Dendritic cell treated with granulocyte-macrophage colony-stimulating factor and Interleukin-4, amounts not matched to agents 40 ng/mL and 50 ng/mL, for 4 days (primary cell): ENCODE measurements at regions of chr7 and their contacts with region 1.

Region 1: GRCh38 chr7:95723592-95724180 is 48.7 kb upstream of the DYNC1I1 start:
- H3K4me3 Mint-ChIP-seq: no peak overlapping the region
- H3K27ac Mint-ChIP-seq: no peak overlapping the region
- H3K4me1 Mint-ChIP-seq: no peaks in the 10 kb centered on the region
- H3K27me3 Mint-ChIP-seq: peaks cover 6% of the 10 kb centered on the region

Region 2: GRCh38 chr7:95690367-95690947 is 33.2 kb before region 1 on chr7:
- intact Hi-C with region 1: no loop called
- H3K4me3 Mint-ChIP-seq: no peak overlapping the region
- H3K27ac Mint-ChIP-seq: no peak overlapping the region
- H3K4me1 Mint-ChIP-seq: no peaks in the 10 kb centered on the region
- H3K27me3 Mint-ChIP-seq: no peaks in the 10 kb centered on the region

Region 3: GRCh38 chr7:95737828-95738505 is 14.3 kb after region 1 on chr7:
- intact Hi-C with region 1: no loop called
- H3K4me3 Mint-ChIP-seq: no peak overlapping the region
- H3K27ac Mint-ChIP-seq: no peak overlapping the region
- H3K4me1 Mint-ChIP-seq: no peaks in the 10 kb centered on the region
- H3K27me3 Mint-ChIP-seq: peaks cover 2% of the 10 kb centered on the region

Region 4: DNA sequence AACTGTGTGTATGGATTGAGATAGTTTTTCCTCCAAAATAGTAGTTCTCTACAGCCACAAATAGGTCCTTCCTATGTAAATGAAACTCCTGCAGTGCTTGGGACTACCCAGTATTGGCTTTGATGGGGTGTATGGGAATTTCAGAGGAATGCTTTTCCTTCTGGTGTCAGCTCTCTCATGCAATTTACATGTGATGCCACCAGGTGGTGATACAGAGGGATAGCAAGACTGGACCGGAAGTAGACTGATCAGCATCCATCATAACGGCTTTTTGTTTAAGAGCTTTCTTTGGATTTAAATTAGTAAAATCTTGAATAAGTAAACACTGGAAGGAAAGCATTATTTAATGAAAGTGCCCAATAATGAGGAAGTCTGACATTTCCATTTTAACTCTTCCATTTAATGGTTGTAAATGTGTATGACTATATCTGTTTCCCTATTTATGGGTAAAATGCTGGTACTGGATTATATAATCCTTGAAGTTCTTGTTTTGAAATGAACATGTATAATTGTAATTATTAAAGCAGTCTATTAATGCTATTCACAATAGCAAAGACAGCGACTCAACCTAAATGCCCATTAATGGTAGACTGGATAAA is 71.3 kb after region 1 on chr7:
- intact Hi-C with region 1: loop called (anchors 5 kb)
- H3K4me3 Mint-ChIP-seq: no peak overlapping the region
- H3K27ac Mint-ChIP-seq: no peak overlapping the region
- H3K4me1 Mint-ChIP-seq: no peaks in the 10 kb centered on the region
- H3K27me3 Mint-ChIP-seq: peaks cover 1% of the 10 kb centered on the region

Region 5: GRCh38 chr7:95871078-95871782 is 147.5 kb after region 1 on chr7:
- intact Hi-C with region 1: loop called (anchors 2 kb)
- H3K4me3 Mint-ChIP-seq: no peak overlapping the region
- H3K27ac Mint-ChIP-seq: no peak overlapping the region
- H3K4me1 Mint-ChIP-seq: no peaks in the 10 kb centered on the region
- H3K27me3 Mint-ChIP-seq: peaks cover 2% of the 10 kb centered on the region

Region 6: GRCh38 chr7:96075510-96076349 is 352.0 kb after region 1 on chr7:
- intact Hi-C with region 1: no loop called
- H3K4me3 Mint-ChIP-seq: peak overlapping the region; percentile 39
- H3K27ac Mint-ChIP-seq: no peak overlapping the region
- H3K4me1 Mint-ChIP-seq: peaks cover 8% of the 10 kb centered on the region
- H3K27me3 Mint-ChIP-seq: peaks cover 31% of the 10 kb centered on the region